AG04449 (cell line): ENCODE measurements at regions of chr5 and their contacts with region 1.

Region 1: DNA sequence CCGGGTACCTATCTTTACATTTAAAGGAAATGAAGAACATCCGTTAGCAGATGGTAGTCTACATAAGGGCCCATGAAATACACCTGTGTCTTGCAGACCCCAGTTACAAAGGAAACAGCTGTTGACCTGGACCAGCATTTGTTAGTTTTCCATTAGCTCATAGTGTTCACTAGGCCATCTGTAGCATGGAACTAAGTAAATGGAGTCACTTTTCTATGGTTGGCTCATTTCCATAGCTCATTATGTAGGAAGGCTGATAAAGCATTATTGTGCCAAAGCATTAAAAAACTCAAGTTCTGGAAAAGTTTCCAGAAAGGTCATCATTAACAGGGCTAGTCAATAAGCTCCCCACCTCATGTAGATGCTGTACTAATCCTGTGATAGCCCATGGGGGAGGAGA is 62.1 kb downstream of the PCSK1 start:
- DNase-seq: no peak
- H3K4me3 ChIP-seq: no peak overlapping the region
- CTCF ChIP-seq: no peak

Region 2: DNA sequence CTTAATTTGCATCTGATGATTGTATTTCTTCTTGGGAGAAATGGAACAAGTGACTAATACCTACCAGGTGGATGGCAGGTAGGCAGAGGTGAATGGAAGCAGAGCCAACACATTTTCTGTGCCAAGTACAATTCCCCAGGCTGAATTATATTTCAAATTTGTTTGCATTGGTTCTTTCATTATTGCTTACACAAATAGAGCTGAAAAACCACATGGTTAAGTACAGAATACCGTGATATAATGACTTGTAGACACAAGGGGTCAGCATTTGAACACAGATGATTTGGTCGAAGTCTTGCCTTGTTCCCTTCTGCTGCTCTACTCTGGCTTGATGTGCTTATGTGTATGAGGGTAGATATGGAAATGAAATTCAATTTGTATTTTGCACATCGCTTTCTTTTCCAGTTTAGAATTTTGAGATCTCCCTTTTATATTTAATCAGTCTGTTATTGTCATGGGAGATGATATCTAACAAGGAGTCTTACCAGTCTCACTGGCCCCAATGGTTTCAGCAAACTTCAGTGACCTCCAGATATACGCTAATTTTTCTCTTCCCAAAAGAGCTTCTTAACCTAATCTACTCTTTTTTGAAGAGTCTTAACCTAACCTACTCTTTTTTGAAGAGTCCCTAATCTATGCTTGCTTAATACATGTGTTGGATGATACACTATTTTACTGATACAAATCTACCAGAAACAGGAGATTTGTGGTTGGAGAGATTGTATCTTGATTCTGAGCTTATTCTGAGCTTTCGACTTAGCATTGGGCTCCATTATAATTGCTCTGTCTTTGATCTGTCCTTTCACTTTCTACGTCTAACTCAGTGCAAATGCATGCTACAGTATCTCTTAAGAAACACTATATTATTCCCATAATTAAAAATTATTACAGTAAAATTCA is 26.0 kb before region 1 on chr5:
- CTCF ChIA-PET with region 1: interaction called, 15 read pairs
- POLR2A ChIA-PET with region 1: no interaction called
- DNase-seq: peak; percentile 51
- H3K4me3 ChIP-seq: no peak overlapping the region
- CTCF ChIP-seq: peak; percentile 51

Region 3: DNA sequence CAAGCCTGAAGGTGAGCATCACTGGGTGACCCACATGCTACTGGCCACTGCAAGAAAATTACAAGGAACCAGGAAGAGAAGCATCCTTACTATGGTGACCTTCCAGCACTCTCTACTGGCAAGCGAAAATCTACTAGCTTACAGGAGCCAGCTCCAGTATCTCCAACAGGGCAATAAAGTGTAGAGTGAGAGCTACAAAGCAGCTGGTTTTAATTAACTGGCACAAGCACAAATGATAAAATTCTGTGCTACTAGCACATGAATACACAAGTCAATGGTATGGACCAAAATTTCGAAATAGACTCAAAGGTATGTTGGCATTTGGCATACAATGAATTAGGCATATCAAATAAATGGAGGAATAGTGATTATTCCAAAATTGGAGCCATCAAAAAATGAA is 178.0 kb after region 1 on chr5:
- CTCF ChIA-PET with region 1: no interaction called
- POLR2A ChIA-PET with region 1: no interaction called
- DNase-seq: no peak
- H3K4me3 ChIP-seq: no peak overlapping the region
- CTCF ChIP-seq: no peak